Activated CD8-positive, alpha-beta T cell treated with anti-CD3 and anti-CD28 coated beads for 36 hours (primary cell): ENCODE measurements at regions of chr2 and their contacts with region 1.

Region 1: GRCh38 chr2:133844214-133844892 is 276.1 kb upstream of the NCKAP5 start:
- DNase-seq: peak; percentile 65
- ATAC-seq: peak; percentile 56
- H3K4me3 Mint-ChIP-seq: no peak overlapping the region
- H3K27ac Mint-ChIP-seq: no peak overlapping the region
- H3K4me1 Mint-ChIP-seq: peaks cover 4% of the 10 kb centered on the region
- H3K27me3 Mint-ChIP-seq: peaks cover 5% of the 10 kb centered on the region
- CTCF ChIP-seq: peak; percentile 87

Region 2: GRCh38 chr2:133748007-133748700 is 96.2 kb before region 1 on chr2:
- CTCF ChIA-PET with region 1: no interaction called
- POLR2A ChIA-PET with region 1: no interaction called
- intact Hi-C with region 1: no loop called
- DNase-seq: no peak
- ATAC-seq: no peak
- H3K4me3 Mint-ChIP-seq: no peak overlapping the region
- H3K27ac Mint-ChIP-seq: no peak overlapping the region
- H3K4me1 Mint-ChIP-seq: no peaks in the 10 kb centered on the region
- H3K27me3 Mint-ChIP-seq: no peaks in the 10 kb centered on the region
- CTCF ChIP-seq: no peak

Region 3: DNA sequence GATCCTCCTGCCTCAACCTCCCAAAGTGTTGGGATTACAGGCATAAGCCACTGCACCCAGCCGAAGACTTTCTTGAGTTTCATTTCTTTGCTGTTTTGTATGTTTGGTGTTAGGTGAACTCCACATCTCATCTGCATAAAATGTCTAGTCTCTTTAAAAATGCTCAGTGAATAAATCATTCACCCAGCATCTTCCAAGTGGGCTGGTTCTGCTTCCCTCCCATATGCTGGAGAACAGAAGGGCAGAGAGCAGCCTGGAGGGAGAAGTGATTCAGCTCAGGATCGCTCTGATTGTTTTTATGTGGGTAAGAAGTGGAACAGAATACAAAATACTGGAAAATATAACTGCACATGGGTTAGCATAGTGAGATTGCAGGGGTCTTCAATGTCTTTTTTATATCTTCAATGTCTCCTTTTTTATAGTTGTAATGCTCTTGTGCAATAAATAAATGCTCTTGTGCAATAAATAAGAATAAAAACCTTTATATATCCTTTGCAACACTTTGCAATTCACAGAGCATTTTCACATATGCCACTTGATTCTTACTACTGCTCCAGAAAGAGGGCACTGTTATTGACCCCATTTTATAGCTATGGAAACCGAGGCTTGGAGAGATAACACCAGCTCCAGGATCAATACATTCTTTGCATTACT is 23.1 kb before region 1 on chr2:
- CTCF ChIA-PET with region 1: interaction called, 10 read pairs
- POLR2A ChIA-PET with region 1: no interaction called
- intact Hi-C with region 1: no loop called
- DNase-seq: no peak
- ATAC-seq: no peak
- H3K4me3 Mint-ChIP-seq: no peak overlapping the region
- H3K27ac Mint-ChIP-seq: no peak overlapping the region
- H3K4me1 Mint-ChIP-seq: no peaks in the 10 kb centered on the region
- H3K27me3 Mint-ChIP-seq: peaks cover 6% of the 10 kb centered on the region
- CTCF ChIP-seq: no peak

Region 4: DNA sequence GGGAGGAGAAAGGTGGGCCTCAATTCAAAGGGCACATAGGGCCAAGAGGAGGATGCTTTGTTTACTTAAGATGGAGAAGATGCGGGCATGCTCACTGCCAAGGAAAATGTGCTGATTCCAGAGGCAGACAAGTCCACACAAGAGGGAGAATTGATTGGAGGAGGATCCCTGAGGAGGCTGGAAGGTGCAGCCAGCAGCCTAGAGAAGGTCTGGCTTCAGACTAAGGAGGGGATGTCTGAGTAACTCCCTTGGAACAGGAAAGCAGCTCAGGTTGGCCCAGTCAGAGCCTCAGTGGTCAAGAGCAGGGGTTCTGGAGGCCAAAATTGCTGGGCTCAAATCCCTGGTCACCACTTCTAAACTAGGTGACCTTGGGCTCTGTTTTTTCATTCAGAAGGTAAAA is 10.6 kb before region 1 on chr2:
- CTCF ChIA-PET with region 1: interaction called, 12 read pairs
- POLR2A ChIA-PET with region 1: interaction called, 3 read pairs
- intact Hi-C with region 1: no loop called
- DNase-seq: no peak
- ATAC-seq: no peak
- H3K4me3 Mint-ChIP-seq: no peak overlapping the region
- H3K27ac Mint-ChIP-seq: no peak overlapping the region
- H3K4me1 Mint-ChIP-seq: no peaks in the 10 kb centered on the region
- H3K27me3 Mint-ChIP-seq: no peaks in the 10 kb centered on the region
- CTCF ChIP-seq: no peak

Region 5: DNA sequence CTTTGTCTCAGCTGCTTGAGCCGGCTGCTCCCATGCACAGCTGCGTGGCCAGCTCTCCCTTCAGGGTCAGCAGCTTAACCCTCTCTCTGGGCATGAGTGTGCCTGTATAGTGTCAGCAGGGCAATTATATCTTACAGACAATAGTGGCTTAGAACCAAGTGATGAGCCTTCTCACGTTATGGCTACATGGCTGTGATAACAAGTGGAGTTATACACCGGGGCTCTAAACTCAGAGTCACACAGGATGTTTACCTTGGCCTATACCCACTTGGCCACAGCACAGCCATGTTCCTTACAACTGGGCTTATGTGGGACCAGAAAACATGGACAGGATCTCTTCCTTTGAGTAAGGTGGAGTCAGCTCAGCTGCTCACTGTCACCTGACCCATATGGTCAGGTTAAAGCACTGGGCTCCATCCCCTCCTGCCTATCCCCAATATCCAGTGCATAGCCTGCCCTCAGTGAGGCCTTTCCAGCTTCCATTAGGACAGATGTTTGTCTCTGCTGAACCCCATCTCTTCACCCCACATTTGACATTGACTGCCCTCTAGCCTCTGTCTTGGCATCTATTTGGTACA is 18.1 kb after region 1 on chr2:
- CTCF ChIA-PET with region 1: interaction called, 10 read pairs
- POLR2A ChIA-PET with region 1: no interaction called
- intact Hi-C with region 1: no loop called
- DNase-seq: no peak
- ATAC-seq: no peak
- H3K4me3 Mint-ChIP-seq: no peak overlapping the region
- H3K27ac Mint-ChIP-seq: no peak overlapping the region
- H3K4me1 Mint-ChIP-seq: no peaks in the 10 kb centered on the region
- H3K27me3 Mint-ChIP-seq: peaks cover 20% of the 10 kb centered on the region
- CTCF ChIP-seq: no peak

Region 6: GRCh38 chr2:133875264-133875663 is 30.9 kb after region 1 on chr2:
- CTCF ChIA-PET with region 1: no interaction called
- POLR2A ChIA-PET with region 1: no interaction called
- intact Hi-C with region 1: no loop called
- DNase-seq: no peak
- ATAC-seq: no peak
- H3K4me3 Mint-ChIP-seq: no peak overlapping the region
- H3K27ac Mint-ChIP-seq: no peak overlapping the region
- H3K4me1 Mint-ChIP-seq: no peaks in the 10 kb centered on the region
- H3K27me3 Mint-ChIP-seq: peaks cover 12% of the 10 kb centered on the region
- CTCF ChIP-seq: no peak